ENCODE measurements at regions of chr16 and their contacts with region 1.

Region 1: GRCh38 chr16:75305364-75306098 is 54.1 kb upstream of the BCAR1 start:
- DNase-seq: peak; percentile 97 to 99
- ATAC-seq: peak; percentile 92 to 95
- H3K4me3 ChIP-seq: peak overlapping the region; percentile 26; the same call in 2 of the 3 replicates
- H3K27ac ChIP-seq: peak overlapping the region; percentile 91 to 96
- H3K4me1 ChIP-seq: peaks cover 51% of the 10 kb centered on the region
- CTCF ChIP-seq: no peak
- EP300 ChIP-seq: peak; percentile 78 to 83; a peak in 3 of 5 replicates
- POLR2A ChIP-seq: no peak
- RAD21 ChIP-seq: peak in 1 of 2 experiments; percentile 57; a peak in 3 of 5 replicates

Region 2: GRCh38 chr16:75244844-75245758 is 60.4 kb before region 1 on chr16:
- CTCF ChIA-PET with region 1: interaction called, 3 read pairs
- POLR2A ChIA-PET with region 1: interaction called, 15 read pairs
- DNase-seq: peak; percentile 67 to 80
- ATAC-seq: peak; percentile 80 to 81
- H3K4me3 ChIP-seq: no peak overlapping the region
- H3K27ac ChIP-seq: peak overlapping the region; percentile 82 to 99
- H3K4me1 ChIP-seq: peaks cover 70% of the 10 kb centered on the region
- CTCF ChIP-seq: no peak
- EP300 ChIP-seq: peak in 1 of 2 experiments; percentile 52; a peak in 1 of 5 replicates
- POLR2A ChIP-seq: 0 out of 2 replicates have a peak, but pooled peaks have one; percentile 10
- RAD21 ChIP-seq: 0 out of 5 replicates have a peak, but pooled peaks of 1 of the 2 experiments have one; percentile 17

Region 3: DNA sequence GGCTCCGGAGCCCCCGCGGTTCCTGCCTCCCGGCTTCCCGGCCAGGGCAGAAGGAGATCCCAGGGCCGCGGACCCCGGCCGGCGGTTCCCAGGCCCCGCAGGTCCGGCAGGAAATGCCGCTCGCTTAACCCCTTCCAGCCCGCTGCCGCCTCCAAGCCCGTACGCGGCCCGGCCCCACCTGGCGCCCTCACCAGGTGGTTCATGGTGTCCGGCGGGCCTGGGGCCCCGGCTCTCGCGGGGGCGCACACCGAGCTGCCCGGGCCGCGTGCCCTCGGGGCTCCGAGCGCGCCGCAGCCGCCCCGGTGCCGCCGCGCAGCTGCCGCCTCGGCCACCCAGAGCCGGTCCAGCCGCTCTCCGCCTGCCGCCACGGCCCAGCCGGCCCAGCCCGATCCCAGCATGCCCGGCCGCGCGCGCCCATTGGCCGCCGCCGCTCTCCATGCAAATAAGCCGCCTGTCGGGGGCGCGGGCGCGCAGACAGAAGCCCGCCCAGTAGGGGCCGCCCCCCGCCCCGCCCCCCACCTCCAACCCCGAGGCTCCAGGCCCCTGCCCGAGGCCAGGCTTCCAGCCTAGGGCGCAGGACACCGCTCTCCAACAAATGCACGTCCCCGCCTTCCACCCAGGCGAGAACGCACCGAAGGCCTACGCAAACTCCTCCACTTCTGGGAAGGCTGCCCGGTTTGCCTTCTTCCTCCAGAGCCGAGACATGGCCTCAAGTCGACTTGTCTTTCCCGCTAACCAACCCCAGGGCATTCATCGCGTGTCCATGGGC is 54.1 kb before region 1 on chr16 and contains the start of gene BCAR1:
- CTCF ChIA-PET with region 1: interaction called, 4 read pairs
- POLR2A ChIA-PET with region 1: interaction called, 15 read pairs
- DNase-seq: peak; percentile 85 to 87
- ATAC-seq: peak; percentile 69 to 77
- H3K4me3 ChIP-seq: peak within 1 kb of the TSS; percentile 74
- H3K27ac ChIP-seq: peak within 1 kb of the TSS; percentile 89 to 99
- H3K4me1 ChIP-seq: peaks cover 83% of the 10 kb centered on the region
- CTCF ChIP-seq: no peak; the same call in 2 of the 3 replicates
- EP300 ChIP-seq: no peak
- POLR2A ChIP-seq: peak; percentile 65
- RAD21 ChIP-seq: no peak
- polyA plus RNA-seq, gene BCAR1: 8.3 and 10.2 TPM in 2 replicates

Region 4: GRCh38 chr16:75379911-75380847 is 74.6 kb after region 1 on chr16:
- CTCF ChIA-PET with region 1: no interaction called
- POLR2A ChIA-PET with region 1: interaction called, 13 read pairs
- DNase-seq: no peak
- ATAC-seq: no peak
- H3K4me3 ChIP-seq: no peak overlapping the region
- H3K27ac ChIP-seq: no peak overlapping the region
- H3K4me1 ChIP-seq: peaks cover 15% of the 10 kb centered on the region
- CTCF ChIP-seq: no peak
- EP300 ChIP-seq: no peak
- POLR2A ChIP-seq: no peak
- RAD21 ChIP-seq: no peak

Region 5: DNA sequence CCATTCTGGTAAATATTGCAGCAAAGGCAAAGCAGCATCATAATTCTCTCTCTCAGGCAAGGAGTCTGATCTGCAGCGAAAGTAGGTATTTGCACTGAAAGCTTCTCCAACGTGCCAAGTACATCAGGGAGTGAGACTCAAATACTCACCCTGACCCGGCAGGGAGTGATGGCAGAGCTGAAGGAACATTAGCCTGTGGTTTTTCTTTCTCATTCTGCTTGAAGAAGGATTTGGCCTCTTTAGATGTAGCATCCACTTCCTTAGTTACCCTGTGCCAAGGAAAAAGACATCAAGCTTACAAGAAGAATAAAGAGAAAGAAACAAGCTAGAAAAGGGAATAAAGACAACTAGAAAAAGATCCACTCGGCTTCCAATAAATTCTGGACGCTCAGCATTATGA is 89.4 kb after region 1 on chr16:
- CTCF ChIA-PET with region 1: no interaction called
- POLR2A ChIA-PET with region 1: no interaction called
- DNase-seq: no peak
- ATAC-seq: no peak
- H3K4me3 ChIP-seq: no peak overlapping the region
- H3K27ac ChIP-seq: no peak overlapping the region
- H3K4me1 ChIP-seq: no peaks in the 10 kb centered on the region
- CTCF ChIP-seq: no peak
- EP300 ChIP-seq: no peak
- POLR2A ChIP-seq: no peak
- RAD21 ChIP-seq: no peak

Region 6: DNA sequence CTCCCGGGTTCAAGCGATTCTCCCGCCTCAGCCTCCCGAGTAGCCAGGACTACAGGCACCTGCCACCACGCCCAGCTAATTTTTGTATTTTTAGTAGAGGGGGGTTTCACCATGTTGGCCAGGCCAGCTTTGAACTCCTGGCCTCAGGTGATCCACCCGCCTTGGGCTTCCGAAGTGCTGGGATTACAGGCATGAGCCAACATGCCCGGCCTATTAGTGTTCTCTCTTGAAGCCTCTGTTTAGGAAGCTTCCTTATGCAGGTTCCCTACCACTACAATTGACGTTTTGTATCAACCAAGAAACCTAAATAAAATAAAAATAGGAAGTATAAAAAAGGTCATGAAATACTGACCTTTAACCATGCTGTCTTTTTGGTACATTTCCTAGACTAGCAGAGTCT is 214.3 kb after region 1 on chr16:
- CTCF ChIA-PET with region 1: no interaction called
- POLR2A ChIA-PET with region 1: no interaction called
- DNase-seq: no peak
- ATAC-seq: no peak
- H3K4me3 ChIP-seq: no peak overlapping the region
- H3K27ac ChIP-seq: no peak overlapping the region
- H3K4me1 ChIP-seq: no peaks in the 10 kb centered on the region; the same call in 2 of the 3 replicates
- CTCF ChIP-seq: no peak
- EP300 ChIP-seq: no peak
- POLR2A ChIP-seq: no peak
- RAD21 ChIP-seq: no peak